ENCODE measurements at regions of chr17 and their contacts with region 1.

Region 1: GRCh38 chr17:71099003-71099714 is 929.8 kb downstream of the KCNJ2 start:
- DNase-seq: no peak
- H3K4me3 ChIP-seq: no peak overlapping the region
- H3K27ac ChIP-seq: no peak overlapping the region
- H3K4me1 ChIP-seq: no peaks in the 10 kb centered on the region
- H3K27me3 ChIP-seq: no peaks in the 10 kb centered on the region
- CTCF ChIP-seq: no peak
- POLR2A ChIP-seq: no peak

Region 2: GRCh38 chr17:71170070-71170469 is 70.9 kb after region 1 on chr17:
- intact Hi-C with region 1: loop called (anchors 2 kb)
- DNase-seq: no peak
- H3K4me3 ChIP-seq: no peak overlapping the region
- H3K27ac ChIP-seq: no peak overlapping the region
- H3K4me1 ChIP-seq: no peaks in the 10 kb centered on the region
- H3K27me3 ChIP-seq: no peaks in the 10 kb centered on the region
- CTCF ChIP-seq: no peak
- POLR2A ChIP-seq: no peak

Measured in breast epithelium (tissue), 4 donors.